Mammary epithelial cell (primary cell): ENCODE measurements at regions of chr19 and their contacts with region 1.

Region 1: GRCh38 chr19:14536926-14537692 is 7.7 kb downstream of the TECR start:
- DNase-seq: peak; percentile 81
- H3K4me3 ChIP-seq: peak overlapping the region in 1 of 3 experiments; percentile 34
- H3K27ac ChIP-seq: no peak overlapping the region
- H3K4me1 ChIP-seq: peaks cover 4% of the 10 kb centered on the region
- H3K27me3 ChIP-seq: no peaks in the 10 kb centered on the region
- CTCF ChIP-seq: no peak

Region 2: GRCh38 chr19:14550201-14550784 is 13.2 kb after region 1 on chr19:
- CTCF ChIA-PET with region 1: interaction called, 3 read pairs
- dilution Hi-C with region 1: no loop called
- in situ Hi-C with region 1: no loop called
- intact Hi-C with region 1: loop called (anchors 2 kb)
- DNase-seq: peak; percentile 58
- H3K4me3 ChIP-seq: no peak overlapping the region
- H3K27ac ChIP-seq: peak overlapping the region; percentile 12
- H3K4me1 ChIP-seq: peaks cover 41% of the 10 kb centered on the region
- H3K27me3 ChIP-seq: no peaks in the 10 kb centered on the region
- CTCF ChIP-seq: no peak

Region 3: DNA sequence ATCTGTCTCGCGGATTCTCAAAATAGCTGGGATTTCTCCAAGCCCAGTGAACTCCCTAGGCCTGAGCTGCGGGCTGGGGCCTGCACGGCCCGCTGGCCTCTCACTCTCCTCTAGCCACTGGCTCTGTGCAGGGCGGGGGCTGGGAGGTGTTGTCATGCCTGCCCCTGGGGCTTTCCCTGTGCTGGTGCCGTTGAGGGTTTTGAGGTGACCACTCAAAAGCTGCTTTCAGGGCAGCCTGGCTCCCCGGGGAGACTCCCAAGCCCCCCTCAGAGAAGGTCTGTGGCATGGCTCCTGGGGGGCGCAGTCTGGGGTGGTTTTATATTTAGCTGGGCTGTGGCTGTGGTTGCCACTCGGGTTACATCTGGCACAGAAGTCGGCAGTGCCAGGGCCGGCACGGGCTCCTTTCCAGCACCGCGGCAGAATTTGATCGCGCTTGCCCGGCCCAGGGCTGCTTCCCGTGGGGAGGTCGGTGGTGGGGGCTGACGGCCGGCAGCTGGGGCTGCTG is 24.8 kb after region 1 on chr19:
- CTCF ChIA-PET with region 1: no interaction called
- dilution Hi-C with region 1: no loop called
- in situ Hi-C with region 1: no loop called
- intact Hi-C with region 1: no loop called
- DNase-seq: peak; percentile 81
- H3K4me3 ChIP-seq: peak overlapping the region; percentile 22 to 31 (median 29)
- H3K27ac ChIP-seq: peak overlapping the region; percentile 77
- H3K4me1 ChIP-seq: peaks cover 55% of the 10 kb centered on the region
- H3K27me3 ChIP-seq: no peaks in the 10 kb centered on the region
- CTCF ChIP-seq: no peak